ENCODE measurements at regions of chr4 and their contacts with region 1.

Region 1: DNA sequence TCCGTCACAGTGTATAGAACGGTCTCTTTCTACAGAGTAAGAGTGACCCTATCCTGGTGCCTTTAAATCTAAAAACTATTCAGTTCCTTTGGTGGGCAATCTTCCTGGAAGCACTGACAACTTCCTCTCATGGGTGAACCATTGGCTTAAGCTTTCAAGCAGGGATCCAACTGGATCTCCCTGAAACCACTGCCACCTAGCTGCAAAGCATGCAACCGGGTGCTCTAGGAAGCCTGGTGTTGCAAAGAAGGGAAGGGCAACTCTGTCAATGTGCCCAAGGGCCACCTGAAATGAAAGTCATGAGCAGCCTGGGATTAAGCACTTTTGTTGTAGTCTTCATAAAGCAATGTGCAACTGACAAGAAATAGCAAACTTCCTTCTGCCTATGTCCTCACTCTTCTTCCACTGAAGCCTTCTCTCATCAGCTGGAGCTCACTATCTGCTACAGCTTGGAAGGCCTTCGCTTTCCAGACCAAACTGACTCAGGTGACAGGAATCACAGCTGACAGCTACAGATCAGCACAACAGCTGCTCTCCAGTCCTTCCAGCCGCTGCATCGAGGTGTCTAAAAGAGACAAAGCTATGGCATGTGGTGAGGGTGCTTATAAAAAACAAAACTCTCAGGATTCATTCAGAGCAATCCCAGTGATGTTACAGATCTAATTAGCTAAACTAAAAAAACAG is 46.1 kb downstream of the SETD7 start:
- DNase-seq: no peak
- H3K4me3 ChIP-seq: no peak overlapping the region
- H3K27me3 ChIP-seq: no peaks in the 10 kb centered on the region
- CTCF ChIP-seq: peak; percentile 44

Region 2: DNA sequence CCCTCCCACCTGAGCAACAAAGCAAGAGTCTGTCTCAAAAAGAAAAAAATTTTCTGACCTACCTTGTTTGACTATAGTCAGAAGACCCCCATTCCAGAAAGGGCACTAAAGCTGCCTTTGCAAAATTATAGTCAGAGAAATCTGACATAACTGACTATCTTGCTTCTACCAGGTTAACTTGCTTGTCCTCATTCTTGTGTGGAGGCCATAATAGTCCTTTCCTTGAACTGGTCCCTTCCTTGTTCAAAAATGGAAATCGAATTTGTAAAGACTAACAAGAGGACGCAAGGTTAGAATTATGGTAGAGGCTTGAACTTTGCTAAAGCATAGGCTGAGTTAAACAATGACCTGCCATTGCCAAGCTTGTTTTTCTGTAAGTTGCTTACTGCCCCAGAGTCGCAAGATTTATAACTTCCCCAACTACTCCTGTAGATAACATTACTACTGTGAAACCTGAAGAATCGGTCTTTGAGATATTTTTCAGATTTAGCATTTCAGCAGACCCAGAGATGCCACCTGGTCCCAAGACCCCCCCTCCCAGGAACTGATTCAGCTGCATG is 10.8 kb before region 1 on chr4:
- CTCF ChIA-PET with region 1: interaction called, 12 read pairs
- POLR2A ChIA-PET with region 1: no interaction called
- DNase-seq: no peak
- H3K4me3 ChIP-seq: no peak overlapping the region
- H3K27me3 ChIP-seq: no peaks in the 10 kb centered on the region
- CTCF ChIP-seq: no peak

Measured in BJ (cell line).